Upper lobe of right lung (tissue), 1 donor: ENCODE measurements at regions of chr1 and their contacts with region 1.

Region 1: GRCh38 chr1:233440951-233441401 is 113.5 kb downstream of the MAP3K21 start:
- DNase-seq: no peak
- ATAC-seq: peak; percentile 81
- H3K4me3 ChIP-seq: no peak overlapping the region
- H3K27ac ChIP-seq: no peak overlapping the region
- H3K4me1 ChIP-seq: no peaks in the 10 kb centered on the region
- H3K27me3 ChIP-seq: no peaks in the 10 kb centered on the region
- CTCF ChIP-seq: peak; percentile 57

Region 2: DNA sequence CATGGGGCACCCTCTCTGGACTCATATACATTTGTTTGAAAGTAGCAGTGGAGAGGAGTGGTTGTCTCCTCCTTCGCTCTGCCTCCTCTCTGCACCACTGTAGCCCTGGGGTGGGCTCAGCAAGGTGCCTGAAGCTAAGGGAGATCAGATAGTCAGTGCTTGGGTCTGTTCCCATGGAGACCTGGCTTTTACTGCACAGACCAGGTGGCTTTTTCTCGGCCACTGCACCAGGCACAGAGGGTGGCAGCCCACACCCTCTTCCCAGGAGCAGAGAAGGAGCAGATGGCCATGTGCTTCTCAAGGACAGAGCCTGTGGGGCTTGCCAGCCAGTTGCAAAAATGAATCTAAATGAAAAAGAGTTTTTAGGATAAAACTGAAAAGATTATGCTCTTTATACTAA is 49.5 kb after region 1 on chr1:
- intact Hi-C with region 1: no loop called
- DNase-seq: no peak
- ATAC-seq: no peak
- H3K4me3 ChIP-seq: no peak overlapping the region
- H3K27ac ChIP-seq: no peak overlapping the region
- H3K4me1 ChIP-seq: no peaks in the 10 kb centered on the region
- H3K27me3 ChIP-seq: no peaks in the 10 kb centered on the region
- CTCF ChIP-seq: no peak

Region 3: GRCh38 chr1:233790662-233791375 is 349.8 kb after region 1 on chr1:
- intact Hi-C with region 1: loop called (anchors 10 kb)
- DNase-seq: no peak
- ATAC-seq: peak; percentile 94
- H3K4me3 ChIP-seq: no peak overlapping the region
- H3K27ac ChIP-seq: no peak overlapping the region
- H3K4me1 ChIP-seq: no peaks in the 10 kb centered on the region
- H3K27me3 ChIP-seq: no peaks in the 10 kb centered on the region
- CTCF ChIP-seq: peak; percentile 87